Dendritic cell treated with granulocyte-macrophage colony-stimulating factor and Interleukin-4, amounts not matched to agents 40 ng/mL and 50 ng/mL, for 4 days (primary cell): ENCODE measurements at regions of chr10 and their contacts with region 1.

Region 1: DNA sequence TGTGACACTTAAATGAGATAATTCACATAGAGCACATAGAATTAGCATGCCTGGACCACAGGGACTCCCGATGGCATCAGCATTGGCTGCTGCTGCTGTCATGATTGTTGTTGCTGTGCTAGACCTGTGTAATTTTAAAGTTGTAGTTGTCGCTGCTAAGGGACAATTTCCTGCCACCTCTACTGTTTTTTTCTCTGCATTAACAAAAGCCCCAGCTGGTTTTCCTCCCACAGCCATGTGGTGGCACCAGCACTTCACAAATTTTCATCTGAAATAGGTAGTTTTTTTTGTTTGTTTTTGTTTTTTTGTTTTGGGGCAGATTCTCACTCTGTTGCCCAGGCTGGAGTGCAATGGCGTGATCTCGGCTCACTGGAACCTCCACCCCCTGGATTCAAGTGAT is 25.4 kb upstream of the PRXL2A start:
- H3K4me3 Mint-ChIP-seq: no peak overlapping the region
- H3K27ac Mint-ChIP-seq: no peak overlapping the region
- H3K4me1 Mint-ChIP-seq: peaks cover 21% of the 10 kb centered on the region
- H3K27me3 Mint-ChIP-seq: peaks cover 2% of the 10 kb centered on the region

Region 2: GRCh38 chr10:80211786-80212185 is 171.2 kb before region 1 on chr10:
- intact Hi-C with region 1: no loop called
- H3K4me3 Mint-ChIP-seq: no peak overlapping the region
- H3K27ac Mint-ChIP-seq: no peak overlapping the region
- H3K4me1 Mint-ChIP-seq: peaks cover 10% of the 10 kb centered on the region
- H3K27me3 Mint-ChIP-seq: peaks cover 5% of the 10 kb centered on the region

Region 3: DNA sequence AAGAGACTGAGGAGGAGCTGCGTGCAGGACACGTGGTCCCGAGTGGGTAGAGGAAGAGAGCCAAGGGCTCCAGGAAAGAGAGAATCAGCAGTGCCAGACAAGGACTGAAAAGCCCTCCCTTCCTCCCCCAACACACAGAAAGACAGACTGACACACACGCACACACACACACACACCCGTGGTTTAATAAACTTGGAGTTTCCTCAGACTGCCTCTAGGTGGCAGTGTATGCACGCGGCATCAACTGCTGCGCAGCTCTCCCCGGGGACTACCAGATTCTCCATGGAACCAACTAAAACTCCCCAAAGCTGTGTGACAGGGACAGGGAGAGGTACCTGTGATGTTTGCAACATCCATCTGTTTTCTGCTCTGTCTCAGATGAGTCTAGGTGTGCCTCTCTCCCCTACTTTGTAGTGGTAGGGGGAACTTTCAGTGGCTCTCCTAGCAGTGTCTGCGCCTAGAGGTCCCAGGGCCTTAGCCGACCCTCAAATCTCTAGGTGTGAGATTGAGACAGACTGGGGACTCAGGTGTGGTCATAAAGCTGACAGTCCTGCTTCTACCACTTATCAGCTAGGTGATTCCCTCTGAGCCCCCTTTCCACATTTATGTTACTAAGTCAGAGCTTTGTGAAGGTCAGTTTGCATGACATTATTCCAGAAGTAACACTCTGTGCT is 61.8 kb after region 1 on chr10:
- intact Hi-C with region 1: loop called (anchors 1 kb)
- H3K4me3 Mint-ChIP-seq: no peak overlapping the region
- H3K27ac Mint-ChIP-seq: peak overlapping the region; percentile 34
- H3K4me1 Mint-ChIP-seq: peaks cover 50% of the 10 kb centered on the region
- H3K27me3 Mint-ChIP-seq: peaks cover 1% of the 10 kb centered on the region

Region 4: GRCh38 chr10:80509403-80510161 is 126.6 kb after region 1 on chr10:
- intact Hi-C with region 1: loop called (anchors 5 kb)
- H3K4me3 Mint-ChIP-seq: no peak overlapping the region
- H3K27ac Mint-ChIP-seq: peak overlapping the region; percentile 36
- H3K4me1 Mint-ChIP-seq: peaks cover 43% of the 10 kb centered on the region
- H3K27me3 Mint-ChIP-seq: no peaks in the 10 kb centered on the region

Region 5: GRCh38 chr10:80599424-80599847 is 216.4 kb after region 1 on chr10:
- intact Hi-C with region 1: loop called (anchors 2 kb)
- H3K4me3 Mint-ChIP-seq: no peak overlapping the region
- H3K27ac Mint-ChIP-seq: peak overlapping the region; percentile 75
- H3K4me1 Mint-ChIP-seq: peaks cover 41% of the 10 kb centered on the region
- H3K27me3 Mint-ChIP-seq: peaks cover 2% of the 10 kb centered on the region